Ovary (tissue), 10 donors: ENCODE measurements at regions of chr7 and their contacts with region 1.

Region 1: GRCh38 chr7:69328516-69328915 is 269.8 kb upstream of the AUTS2 start:
- DNase-seq: no peak
- H3K4me3 ChIP-seq: no peak overlapping the region
- H3K27ac ChIP-seq: no peak overlapping the region
- H3K4me1 ChIP-seq: no peaks in the 10 kb centered on the region
- H3K27me3 ChIP-seq: no peaks in the 10 kb centered on the region
- CTCF ChIP-seq: no peak
- EP300 ChIP-seq: no peak
- POLR2A ChIP-seq: no peak

Region 2: DNA sequence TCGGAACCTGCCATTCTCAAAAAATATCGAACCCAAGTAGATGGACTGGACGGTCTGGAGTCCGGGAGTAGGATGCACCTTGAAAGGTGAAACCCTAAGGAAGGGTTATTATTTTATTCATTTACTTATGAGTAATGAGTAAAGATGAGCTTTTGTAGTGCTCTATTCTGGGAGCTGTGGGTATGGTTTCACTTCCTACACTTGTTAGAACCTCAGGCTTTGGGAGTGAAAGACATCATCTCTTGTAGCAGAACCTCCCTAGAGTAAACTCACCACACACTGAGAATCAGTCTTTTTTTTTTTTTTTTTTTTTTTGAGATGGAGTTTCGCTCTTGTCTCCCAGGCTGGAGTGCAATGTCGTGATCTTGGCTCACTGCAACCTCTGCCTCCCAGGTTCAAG is 119.7 kb before region 1 on chr7:
- intact Hi-C with region 1: loop called in 1 of 4 experiments (anchors 10 kb)
- DNase-seq: no peak
- H3K4me3 ChIP-seq: no peak overlapping the region
- H3K27ac ChIP-seq: no peak overlapping the region
- H3K4me1 ChIP-seq: no peaks in the 10 kb centered on the region
- H3K27me3 ChIP-seq: no peaks in the 10 kb centered on the region
- CTCF ChIP-seq: no peak
- EP300 ChIP-seq: no peak
- POLR2A ChIP-seq: no peak

Region 3: DNA sequence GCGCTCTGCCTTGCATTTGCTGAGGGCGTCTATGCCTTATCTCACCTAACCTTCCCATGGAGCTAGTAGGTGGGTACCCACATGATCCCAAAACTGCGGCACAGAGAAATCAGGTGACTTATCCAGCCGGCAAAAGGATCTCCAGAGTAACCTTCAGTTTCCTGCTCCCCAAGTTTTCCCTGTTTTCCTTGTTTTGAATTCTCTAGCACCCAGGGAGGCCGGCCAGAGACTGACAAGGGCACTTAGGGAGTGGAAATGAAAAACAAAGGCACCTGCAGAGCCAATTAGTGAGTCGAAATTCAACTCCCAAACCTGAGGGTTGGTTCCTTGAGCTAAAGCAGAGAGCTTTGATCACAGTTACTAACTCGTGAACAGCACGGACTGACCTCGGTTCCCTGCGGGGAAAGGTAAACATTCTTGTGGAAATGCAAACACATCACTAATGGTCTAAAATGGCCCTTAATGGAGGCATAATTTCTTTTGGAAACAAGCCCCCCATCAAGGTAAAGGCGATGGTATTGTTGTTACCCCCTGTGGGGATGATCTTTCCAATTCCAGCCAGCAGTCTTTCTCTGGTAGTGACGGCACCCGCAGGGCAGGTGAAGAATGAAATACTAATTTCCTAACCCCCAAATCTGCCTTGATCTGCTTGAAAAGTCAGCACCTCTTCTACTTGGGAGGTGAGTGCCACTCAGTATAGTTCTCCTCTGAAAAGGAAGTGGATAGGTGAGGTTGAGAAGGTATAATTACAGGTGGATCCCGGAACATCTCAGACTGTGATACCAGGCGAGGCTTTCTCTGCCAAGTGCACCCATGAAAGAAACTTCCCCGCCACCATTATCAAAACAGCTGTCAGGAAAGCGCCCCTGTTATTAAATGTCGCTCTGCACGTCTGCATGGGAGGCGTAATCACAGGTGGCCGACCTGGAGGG is 95.8 kb before region 1 on chr7:
- intact Hi-C with region 1: no loop called
- DNase-seq: no peak
- H3K4me3 ChIP-seq: no peak overlapping the region
- H3K27ac ChIP-seq: no peak overlapping the region
- H3K4me1 ChIP-seq: no peaks in the 10 kb centered on the region
- H3K27me3 ChIP-seq: no peaks in the 10 kb centered on the region
- CTCF ChIP-seq: no peak
- EP300 ChIP-seq: no peak
- POLR2A ChIP-seq: no peak

Region 4: GRCh38 chr7:69438584-69439412 is 110.3 kb after region 1 on chr7:
- intact Hi-C with region 1: no loop called
- DNase-seq: no peak
- H3K4me3 ChIP-seq: no peak overlapping the region
- H3K27ac ChIP-seq: no peak overlapping the region
- H3K4me1 ChIP-seq: peaks cover 2% of the 10 kb centered on the region
- H3K27me3 ChIP-seq: no peaks in the 10 kb centered on the region
- CTCF ChIP-seq: no peak
- EP300 ChIP-seq: no peak
- POLR2A ChIP-seq: no peak

Region 5: GRCh38 chr7:69994886-69995542 is 666.5 kb after region 1 on chr7:
- intact Hi-C with region 1: no loop called
- DNase-seq: no peak
- H3K4me3 ChIP-seq: no peak overlapping the region
- H3K27ac ChIP-seq: no peak overlapping the region
- H3K4me1 ChIP-seq: peaks cover 2% of the 10 kb centered on the region
- H3K27me3 ChIP-seq: no peaks in the 10 kb centered on the region
- CTCF ChIP-seq: no peak
- EP300 ChIP-seq: no peak
- POLR2A ChIP-seq: no peak